CD4-positive, alpha-beta T cell (primary cell): ENCODE measurements at regions of chr22 and their contacts with region 1.

Region 1: GRCh38 chr22:22753526-22754267 is 109.3 kb downstream of the GGTLC2 start:
- DNase-seq: peak; percentile 67 to 89 (median 75)
- ATAC-seq: peak; percentile 92
- H3K4me3 ChIP-seq: no peak overlapping the region
- H3K4me3 Mint-ChIP-seq: peak overlapping the region; percentile 62
- H3K27ac ChIP-seq: peak overlapping the region in 1 of 2 donors; percentile 46
- H3K27ac Mint-ChIP-seq: peak overlapping the region; percentile 91
- H3K4me1 ChIP-seq: peaks cover 55% of the 10 kb centered on the region
- H3K4me1 Mint-ChIP-seq: peaks cover 43% of the 10 kb centered on the region
- H3K27me3 ChIP-seq: no peaks in the 10 kb centered on the region
- H3K27me3 Mint-ChIP-seq: no peaks in the 10 kb centered on the region
- CTCF ChIP-seq: peak; percentile 77

Region 2: GRCh38 chr22:22743128-22743760 is 10.5 kb before region 1 on chr22:
- CTCF ChIA-PET with region 1: interaction called, 12 read pairs
- POLR2A ChIA-PET with region 1: no interaction called
- intact Hi-C with region 1: no loop called
- DNase-seq: no peak
- ATAC-seq: no peak
- H3K4me3 ChIP-seq: no peak overlapping the region
- H3K4me3 Mint-ChIP-seq: no peak overlapping the region
- H3K27ac ChIP-seq: no peak overlapping the region
- H3K27ac Mint-ChIP-seq: no peak overlapping the region
- H3K4me1 ChIP-seq: peaks cover 10% of the 10 kb centered on the region
- H3K4me1 Mint-ChIP-seq: peaks cover 3% of the 10 kb centered on the region
- H3K27me3 ChIP-seq: peaks cover 6 to 10% of the 10 kb centered on the region in 2 experiments
- H3K27me3 Mint-ChIP-seq: peaks cover 38% of the 10 kb centered on the region
- CTCF ChIP-seq: no peak

Region 3: GRCh38 chr22:22787786-22788459 is 34.2 kb after region 1 on chr22:
- CTCF ChIA-PET with region 1: interaction called, 36 read pairs
- POLR2A ChIA-PET with region 1: interaction called, 20 read pairs
- intact Hi-C with region 1: loop called in 1 of 2 experiments (anchors 5 kb)
- DNase-seq: peak; percentile 53 to 86 (median 65)
- ATAC-seq: peak; percentile 77
- H3K4me3 ChIP-seq: no peak overlapping the region
- H3K4me3 Mint-ChIP-seq: peak overlapping the region; percentile 18
- H3K27ac ChIP-seq: peak overlapping the region in 1 of 2 donors; percentile 71
- H3K27ac Mint-ChIP-seq: peak overlapping the region; percentile 85
- H3K4me1 ChIP-seq: peaks cover 71% of the 10 kb centered on the region
- H3K4me1 Mint-ChIP-seq: peaks cover 55% of the 10 kb centered on the region
- H3K27me3 ChIP-seq: no peaks in the 10 kb centered on the region
- H3K27me3 Mint-ChIP-seq: no peaks in the 10 kb centered on the region
- CTCF ChIP-seq: peak; percentile 84

Region 4: DNA sequence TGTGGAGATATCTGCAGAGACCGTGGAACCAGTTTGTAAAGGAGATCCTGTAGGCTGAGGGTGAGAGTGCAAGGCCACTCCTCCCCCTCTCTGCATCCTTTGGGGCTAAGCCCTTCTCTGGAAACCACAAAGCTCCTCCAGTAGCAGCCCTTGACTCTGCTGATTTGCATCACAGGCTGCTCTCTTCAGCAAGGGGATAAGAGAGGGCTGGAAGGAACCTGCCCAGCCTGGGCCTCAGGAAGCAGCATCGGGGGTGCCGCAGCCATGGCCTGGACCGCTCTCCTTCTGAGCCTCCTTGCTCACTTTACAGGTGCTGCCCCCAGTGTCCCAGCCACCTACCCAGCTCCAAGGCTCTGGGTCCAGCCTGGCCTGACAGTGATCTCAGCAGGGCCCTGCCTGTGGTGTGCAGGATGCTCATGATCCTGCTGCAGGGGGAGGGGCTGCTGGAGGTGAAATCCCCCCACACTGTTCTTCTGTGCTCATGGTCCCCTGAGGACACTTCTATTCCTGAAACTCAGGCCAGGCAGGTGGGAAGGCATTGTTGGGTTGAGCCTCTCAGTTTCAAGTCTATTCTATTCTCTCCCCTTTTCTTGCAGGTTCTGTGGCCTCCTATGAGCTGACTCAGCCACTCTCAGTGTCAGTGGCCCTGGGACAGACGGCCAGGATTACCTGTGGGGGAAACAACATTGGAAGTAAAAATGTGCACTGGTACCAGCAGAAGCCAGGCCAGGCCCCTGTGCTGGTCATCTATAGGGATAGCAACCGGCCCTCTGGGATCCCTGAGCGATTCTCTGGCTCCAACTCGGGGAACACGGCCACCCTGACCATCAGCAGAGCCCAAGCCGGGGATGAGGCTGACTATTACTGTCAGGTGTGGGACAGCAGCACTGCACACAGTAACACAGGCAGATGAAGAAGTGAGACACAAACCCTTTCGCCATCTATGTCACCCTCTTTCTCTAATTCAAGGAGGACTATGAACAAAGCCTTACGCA is 65.5 kb after region 1 on chr22:
- CTCF ChIA-PET with region 1: no interaction called
- POLR2A ChIA-PET with region 1: interaction called, 11 read pairs
- intact Hi-C with region 1: no loop called
- DNase-seq: peak in 7 of 14 experiments; percentile 29 to 87 (median 58)
- ATAC-seq: peak; percentile 54
- H3K4me3 ChIP-seq: peak overlapping the region; percentile 54
- H3K4me3 Mint-ChIP-seq: peak overlapping the region; percentile 71
- H3K27ac ChIP-seq: peak overlapping the region; percentile 68 to 83
- H3K27ac Mint-ChIP-seq: peak overlapping the region; percentile 97
- H3K4me1 ChIP-seq: peaks cover 95% of the 10 kb centered on the region
- H3K4me1 Mint-ChIP-seq: peaks cover 99% of the 10 kb centered on the region
- H3K27me3 ChIP-seq: no peaks in the 10 kb centered on the region
- H3K27me3 Mint-ChIP-seq: no peaks in the 10 kb centered on the region
- CTCF ChIP-seq: no peak

Region 5: GRCh38 chr22:22877523-22878210 is 124.0 kb after region 1 on chr22:
- CTCF ChIA-PET with region 1: interaction called, 27 read pairs
- POLR2A ChIA-PET with region 1: interaction called, 24 read pairs
- intact Hi-C with region 1: no loop called
- DNase-seq: peak; percentile 65 to 89 (median 75)
- ATAC-seq: peak; percentile 67
- H3K4me3 ChIP-seq: no peak overlapping the region
- H3K4me3 Mint-ChIP-seq: no peak overlapping the region
- H3K27ac ChIP-seq: no peak overlapping the region
- H3K27ac Mint-ChIP-seq: no peak overlapping the region
- H3K4me1 ChIP-seq: peaks cover 3% of the 10 kb centered on the region
- H3K4me1 Mint-ChIP-seq: no peaks in the 10 kb centered on the region
- H3K27me3 ChIP-seq: no peaks in the 10 kb centered on the region
- H3K27me3 Mint-ChIP-seq: no peaks in the 10 kb centered on the region
- CTCF ChIP-seq: peak; percentile 84

Region 6: DNA sequence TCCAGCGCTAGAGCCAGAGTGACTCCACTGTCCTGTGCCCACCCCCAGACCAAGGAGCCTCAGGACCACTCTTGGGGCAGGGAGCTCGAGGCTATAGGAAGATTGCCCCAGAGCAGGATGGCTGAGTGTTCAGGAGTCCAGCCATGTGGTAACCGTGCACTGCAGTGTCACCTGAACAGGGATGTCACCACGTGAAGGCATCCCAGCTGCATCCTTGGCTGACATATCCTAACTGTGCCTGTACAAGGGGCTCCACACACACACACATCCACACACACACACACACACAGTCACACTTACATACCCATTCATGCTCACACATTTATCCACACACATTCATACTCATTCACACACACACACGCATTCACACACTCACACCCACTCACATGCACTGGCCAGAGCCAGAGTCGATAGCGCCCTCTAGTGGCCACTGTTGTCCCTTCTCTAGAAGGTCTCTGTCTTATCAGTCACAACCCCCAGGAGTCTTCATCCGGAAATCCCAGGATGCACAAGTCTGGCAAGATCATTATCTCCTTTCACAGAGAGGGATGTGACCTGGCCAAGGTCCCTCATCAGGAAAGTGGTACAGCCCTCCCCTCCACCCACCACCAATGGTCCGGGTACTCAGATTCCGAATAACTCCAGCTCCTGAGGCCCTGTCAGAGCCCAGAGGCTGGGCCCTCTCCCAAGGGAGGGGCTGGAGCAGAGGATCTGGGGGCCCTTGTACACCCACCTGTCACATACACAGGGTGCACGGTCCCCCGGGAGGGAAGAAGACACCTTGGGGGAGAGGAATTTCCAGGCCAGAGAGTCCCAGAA is 189.0 kb after region 1 on chr22:
- CTCF ChIA-PET with region 1: interaction called, 8 read pairs
- POLR2A ChIA-PET with region 1: no interaction called
- intact Hi-C with region 1: loop called (anchors 5 kb)
- DNase-seq: peak; percentile 53 to 84 (median 70)
- ATAC-seq: peak; percentile 82
- H3K4me3 ChIP-seq: no peak overlapping the region
- H3K4me3 Mint-ChIP-seq: no peak overlapping the region
- H3K27ac ChIP-seq: no peak overlapping the region
- H3K27ac Mint-ChIP-seq: no peak overlapping the region
- H3K4me1 ChIP-seq: peaks cover 7% of the 10 kb centered on the region
- H3K4me1 Mint-ChIP-seq: no peaks in the 10 kb centered on the region
- H3K27me3 ChIP-seq: no peaks in the 10 kb centered on the region
- H3K27me3 Mint-ChIP-seq: no peaks in the 10 kb centered on the region
- CTCF ChIP-seq: peak; percentile 82

Region 7: DNA sequence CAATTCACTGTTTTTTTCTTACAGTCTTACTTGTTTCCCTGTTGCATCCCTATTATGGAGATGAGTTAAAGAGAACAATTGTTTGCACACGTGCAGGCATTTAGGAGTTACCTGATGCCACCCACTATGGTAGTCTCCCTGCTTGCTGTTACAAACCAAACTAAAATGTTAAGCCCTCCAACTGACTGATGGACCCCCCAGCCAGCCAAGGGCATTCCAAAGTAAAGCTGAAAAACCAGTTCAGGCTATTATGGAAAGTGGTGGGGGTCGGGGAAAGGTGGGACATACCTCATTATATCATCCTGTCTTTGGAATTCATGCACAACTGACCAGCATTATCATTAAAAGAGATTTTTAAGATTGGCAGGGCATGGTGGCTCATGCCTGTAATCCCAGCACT is 269.6 kb after region 1 on chr22:
- CTCF ChIA-PET with region 1: no interaction called
- POLR2A ChIA-PET with region 1: no interaction called
- intact Hi-C with region 1: no loop called
- DNase-seq: no peak
- ATAC-seq: no peak
- H3K4me3 ChIP-seq: no peak overlapping the region
- H3K4me3 Mint-ChIP-seq: no peak overlapping the region
- H3K27ac ChIP-seq: no peak overlapping the region
- H3K27ac Mint-ChIP-seq: no peak overlapping the region
- H3K4me1 ChIP-seq: no peaks in the 10 kb centered on the region
- H3K4me1 Mint-ChIP-seq: no peaks in the 10 kb centered on the region
- H3K27me3 ChIP-seq: no peaks in the 10 kb centered on the region
- H3K27me3 Mint-ChIP-seq: peaks cover 6% of the 10 kb centered on the region
- CTCF ChIP-seq: no peak